HAP-1 (cell line): ENCODE measurements at regions of chr12 and their contacts with region 1.

Region 1: GRCh38 chr12:112664569-112664968 is 127.0 kb upstream of the RPH3A start:
- DNase-seq: peak in 1 of 2 experiments; percentile 71
- H3K4me3 ChIP-seq: no peak overlapping the region
- H3K4me1 ChIP-seq: no peaks in the 10 kb centered on the region
- H3K27me3 ChIP-seq: no peaks in the 10 kb centered on the region; the same call in 1 of the 2 replicates

Region 2: GRCh38 chr12:112473056-112473455 is 191.5 kb before region 1 on chr12:
- in situ Hi-C with region 1: no loop called
- DNase-seq: peak in 1 of 2 experiments; percentile 7
- H3K4me3 ChIP-seq: no peak overlapping the region
- H3K4me1 ChIP-seq: no peaks in the 10 kb centered on the region
- H3K27me3 ChIP-seq: no peaks in the 10 kb centered on the region

Region 3: GRCh38 chr12:112798006-112798760 is 133.6 kb after region 1 on chr12:
- in situ Hi-C with region 1: loop called (anchors 10 kb)
- DNase-seq: no peak
- H3K4me3 ChIP-seq: no peak overlapping the region
- H3K4me1 ChIP-seq: no peaks in the 10 kb centered on the region
- H3K27me3 ChIP-seq: peaks cover 42% of the 10 kb centered on the region

Region 4: DNA sequence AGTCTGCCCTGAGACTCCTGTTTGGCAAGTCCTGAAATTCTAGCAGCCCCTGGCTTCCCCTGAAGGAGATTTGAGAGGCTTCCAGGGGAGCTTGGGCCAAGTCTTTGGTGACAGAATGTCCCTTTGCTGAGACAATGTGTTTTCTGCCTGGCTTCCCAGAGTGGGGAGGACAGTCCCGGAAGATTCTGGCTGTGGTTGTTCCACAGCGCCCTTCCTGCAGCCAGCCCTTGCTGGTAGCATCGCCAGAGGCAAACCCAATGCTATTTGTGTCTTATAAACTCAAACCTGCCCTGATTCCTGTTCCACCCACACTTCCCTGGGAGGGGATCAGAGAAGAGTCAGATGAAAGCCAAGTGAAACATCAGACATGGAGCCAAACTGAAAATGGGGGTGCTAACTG is 185.8 kb after region 1 on chr12:
- in situ Hi-C with region 1: no loop called
- DNase-seq: no peak
- H3K4me3 ChIP-seq: no peak overlapping the region
- H3K4me1 ChIP-seq: no peaks in the 10 kb centered on the region
- H3K27me3 ChIP-seq: peaks cover 39% of the 10 kb centered on the region